Activated T-helper 1 cell treated with anti-CD3 and anti-CD28 coated beads, Interleukin-12 subunit alpha, Interleukin-12 subunit beta, Interleukin-2, Interleukin-4 antibody, amounts not matched to agents 30 ng/mL and 10 ng/mL and 1 ng/mL, durations not matched to agents 14 hours and 24 hours and 36 hours (primary cell): ENCODE measurements at regions of chr15 and their contacts with region 1.

Region 1: GRCh38 chr15:44426975-44427755 is at the start of gene CTDSPL2:
- DNase-seq: peak; percentile 93
- H3K4me3 Mint-ChIP-seq: peak within 1 kb of the TSS; percentile 95
- H3K27ac Mint-ChIP-seq: peak within 1 kb of the TSS; percentile 97
- H3K4me1 Mint-ChIP-seq: peaks cover 42% of the 10 kb centered on the region
- H3K27me3 Mint-ChIP-seq: no peaks in the 10 kb centered on the region
- total RNA-seq, gene CTDSPL2: 65.9 and 66.0 TPM in 2 replicates

Region 2: GRCh38 chr15:43749690-43750345 is 677.3 kb before region 1 on chr15:
- intact Hi-C with region 1: loop called (anchors 5 kb)
- DNase-seq: peak; percentile 49
- H3K4me3 Mint-ChIP-seq: peak overlapping the region; percentile 66
- H3K27ac Mint-ChIP-seq: peak overlapping the region; percentile 78
- H3K4me1 Mint-ChIP-seq: peaks cover 39% of the 10 kb centered on the region
- H3K27me3 Mint-ChIP-seq: no peaks in the 10 kb centered on the region

Region 3: GRCh38 chr15:43824302-43825246 is 602.6 kb before region 1 on chr15 and contains the start of gene MFAP1:
- intact Hi-C with region 1: loop called (anchors 1 kb)
- DNase-seq: peak; percentile 91
- H3K4me3 Mint-ChIP-seq: peak within 1 kb of the TSS; percentile 97
- H3K27ac Mint-ChIP-seq: peak within 1 kb of the TSS; percentile 97
- H3K4me1 Mint-ChIP-seq: peaks cover 46% of the 10 kb centered on the region
- H3K27me3 Mint-ChIP-seq: no peaks in the 10 kb centered on the region
- total RNA-seq, gene MFAP1: 46.4 and 46.6 TPM in 2 replicates

Region 4: DNA sequence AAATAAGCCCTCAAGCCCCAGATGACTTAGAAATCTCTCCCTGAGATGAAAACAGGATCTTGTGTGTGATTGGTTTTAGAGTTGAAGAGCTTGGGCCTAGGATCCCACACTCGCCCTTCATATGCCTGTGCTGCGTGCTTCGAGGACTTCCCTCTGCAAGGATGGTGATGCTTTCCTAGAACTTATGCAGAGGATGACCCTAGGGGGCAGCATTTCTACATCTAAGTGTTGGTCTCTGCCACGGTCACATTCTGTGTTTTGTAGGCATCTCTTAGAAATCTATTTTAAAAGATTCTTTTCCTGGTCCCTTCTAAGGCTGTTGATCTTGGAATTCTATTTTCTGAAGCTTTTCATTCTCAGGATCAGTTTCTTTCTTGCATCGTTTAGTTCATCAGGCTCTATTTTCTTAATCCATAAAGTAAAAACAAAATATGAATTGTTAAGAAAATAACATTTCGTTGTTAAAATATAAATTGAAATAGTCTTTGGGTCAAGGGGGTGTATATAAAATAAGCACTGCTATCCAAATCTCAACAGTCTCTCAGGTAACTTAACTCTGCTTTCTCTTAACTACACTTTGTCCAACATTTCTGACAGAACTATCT is 554.6 kb before region 1 on chr15:
- intact Hi-C with region 1: no loop called
- DNase-seq: no peak
- H3K4me3 Mint-ChIP-seq: no peak overlapping the region
- H3K27ac Mint-ChIP-seq: no peak overlapping the region
- H3K4me1 Mint-ChIP-seq: no peaks in the 10 kb centered on the region
- H3K27me3 Mint-ChIP-seq: no peaks in the 10 kb centered on the region

Region 5: GRCh38 chr15:44215594-44215993 is 211.6 kb before region 1 on chr15:
- intact Hi-C with region 1: loop called (anchors 5 kb)
- DNase-seq: no peak
- H3K4me3 Mint-ChIP-seq: no peak overlapping the region
- H3K27ac Mint-ChIP-seq: no peak overlapping the region
- H3K4me1 Mint-ChIP-seq: no peaks in the 10 kb centered on the region
- H3K27me3 Mint-ChIP-seq: peaks cover 11% of the 10 kb centered on the region

Region 6: GRCh38 chr15:44308415-44308814 is 118.8 kb before region 1 on chr15:
- intact Hi-C with region 1: loop called (anchors 1 kb)
- DNase-seq: no peak
- H3K4me3 Mint-ChIP-seq: peak overlapping the region; percentile 69
- H3K27ac Mint-ChIP-seq: peak overlapping the region; percentile 93
- H3K4me1 Mint-ChIP-seq: peaks cover 43% of the 10 kb centered on the region
- H3K27me3 Mint-ChIP-seq: no peaks in the 10 kb centered on the region

Region 7: DNA sequence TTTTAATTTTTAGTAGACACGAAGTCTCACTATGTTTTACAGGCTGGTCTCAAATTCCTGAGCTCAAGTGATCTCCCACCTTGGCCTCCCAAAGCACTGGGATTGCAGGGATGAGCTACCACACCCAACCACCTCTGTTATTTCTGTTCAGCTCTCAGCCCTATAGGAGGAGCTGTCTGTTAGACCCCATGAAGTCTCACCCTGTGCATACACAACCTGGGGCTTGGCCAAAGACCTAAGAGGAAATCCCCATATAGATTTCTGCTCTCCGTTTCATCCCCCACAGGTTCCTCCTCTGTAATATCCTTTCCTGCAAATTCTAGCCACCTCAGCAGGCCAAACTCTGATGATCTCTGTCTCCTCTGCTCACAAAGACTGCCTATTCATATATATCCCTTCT is 56.3 kb before region 1 on chr15:
- intact Hi-C with region 1: no loop called
- DNase-seq: no peak
- H3K4me3 Mint-ChIP-seq: no peak overlapping the region
- H3K27ac Mint-ChIP-seq: no peak overlapping the region
- H3K4me1 Mint-ChIP-seq: no peaks in the 10 kb centered on the region
- H3K27me3 Mint-ChIP-seq: no peaks in the 10 kb centered on the region

Region 8: DNA sequence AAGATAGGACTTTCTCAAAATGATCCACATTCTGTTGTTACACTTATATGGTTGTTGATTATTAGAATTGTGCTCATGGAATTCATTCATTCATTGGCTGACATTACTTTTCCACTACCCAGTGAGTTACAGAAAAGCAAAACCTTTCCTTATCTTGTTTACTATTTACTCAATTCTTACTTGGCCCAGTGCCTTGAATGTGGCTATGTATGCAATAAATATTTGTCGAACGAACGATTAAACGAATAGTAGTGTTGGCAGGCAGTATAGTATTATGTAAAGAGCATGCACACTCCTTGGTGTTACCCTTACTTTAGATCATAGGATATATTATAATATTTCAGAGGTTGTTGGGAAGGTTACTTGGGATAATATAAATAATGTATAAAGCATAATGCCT is 31.3 kb after region 1 on chr15:
- intact Hi-C with region 1: no loop called
- DNase-seq: no peak
- H3K4me3 Mint-ChIP-seq: no peak overlapping the region
- H3K27ac Mint-ChIP-seq: no peak overlapping the region
- H3K4me1 Mint-ChIP-seq: peaks cover 13% of the 10 kb centered on the region
- H3K27me3 Mint-ChIP-seq: no peaks in the 10 kb centered on the region

Region 9: GRCh38 chr15:44501768-44502366 is 74.7 kb after region 1 on chr15:
- intact Hi-C with region 1: loop called (anchors 1 kb)
- DNase-seq: no peak
- H3K4me3 Mint-ChIP-seq: no peak overlapping the region
- H3K27ac Mint-ChIP-seq: no peak overlapping the region
- H3K4me1 Mint-ChIP-seq: peaks cover 22% of the 10 kb centered on the region
- H3K27me3 Mint-ChIP-seq: no peaks in the 10 kb centered on the region

Region 10: DNA sequence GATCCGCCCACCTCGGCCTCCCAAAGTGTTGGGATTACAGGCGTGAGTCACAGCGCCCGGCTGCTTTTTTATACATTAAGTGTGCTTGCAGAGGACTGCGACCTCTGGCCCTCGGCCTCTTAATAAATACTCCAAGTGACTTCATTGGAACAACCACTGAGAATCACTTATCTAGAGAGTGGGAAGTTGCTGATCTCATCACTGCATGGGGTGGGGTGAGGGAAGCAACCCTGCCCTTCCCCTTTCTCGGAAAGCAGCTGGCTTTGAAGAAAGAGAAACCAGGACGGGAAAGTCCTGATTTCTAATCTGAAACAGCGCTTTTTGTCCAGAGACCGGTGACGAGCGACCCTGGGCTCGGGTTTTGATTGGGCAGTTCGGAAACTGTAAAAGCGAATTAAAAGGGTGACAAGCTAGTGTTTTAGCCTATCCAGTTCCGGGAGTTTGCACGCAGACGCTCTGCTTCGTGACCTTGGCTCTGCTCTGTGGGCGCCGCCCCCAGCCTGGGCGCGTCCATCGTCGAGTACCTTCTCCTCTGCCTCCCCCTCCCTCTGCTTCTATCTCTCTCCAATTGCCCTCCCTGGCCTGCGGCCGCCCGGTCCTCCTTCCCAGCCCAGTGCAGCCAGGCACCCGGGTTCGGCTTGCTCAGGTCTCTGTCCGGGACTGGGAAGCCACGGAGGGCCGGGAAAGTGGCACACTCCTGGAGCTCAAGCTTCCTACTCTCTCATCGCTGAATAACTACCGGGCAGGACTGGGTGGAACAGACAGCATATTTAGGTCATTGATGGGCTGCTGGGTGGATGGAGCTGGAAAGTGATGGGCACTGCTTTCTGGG is 301.6 kb after region 1 on chr15:
- intact Hi-C with region 1: loop called (anchors 5 kb)
- DNase-seq: peak; percentile 96
- H3K4me3 Mint-ChIP-seq: peak overlapping the region; percentile 100
- H3K27ac Mint-ChIP-seq: peak overlapping the region; percentile 99
- H3K4me1 Mint-ChIP-seq: peaks cover 77% of the 10 kb centered on the region
- H3K27me3 Mint-ChIP-seq: no peaks in the 10 kb centered on the region

Region 11: DNA sequence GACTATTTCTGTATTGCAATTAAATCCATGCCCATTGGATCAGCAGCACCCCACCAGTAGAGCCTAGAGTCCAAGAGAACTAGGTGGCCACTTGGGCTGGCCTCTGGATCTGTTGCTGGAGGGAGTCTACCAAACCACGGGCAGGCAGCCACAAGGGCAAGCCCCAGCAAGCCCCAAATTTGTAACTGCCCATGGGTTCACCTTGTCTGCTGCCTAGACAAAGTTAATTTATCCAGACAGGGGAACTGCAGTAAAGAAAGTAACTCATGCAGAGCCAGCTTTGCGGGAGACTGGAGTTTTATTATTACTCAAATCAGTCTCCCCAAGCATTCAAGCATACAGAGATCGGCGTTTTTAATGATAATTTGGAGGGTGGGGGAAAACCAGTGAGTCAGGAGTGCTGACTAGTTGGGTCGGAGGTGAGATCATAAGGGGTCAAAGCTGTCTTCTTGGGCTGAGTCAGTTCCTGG is 455.4 kb after region 1 on chr15:
- intact Hi-C with region 1: no loop called
- DNase-seq: peak; percentile 29
- H3K4me3 Mint-ChIP-seq: peak overlapping the region; percentile 34
- H3K27ac Mint-ChIP-seq: peak overlapping the region; percentile 61
- H3K4me1 Mint-ChIP-seq: peaks cover 29% of the 10 kb centered on the region
- H3K27me3 Mint-ChIP-seq: no peaks in the 10 kb centered on the region